ENCODE measurements at regions of chr13 and their contacts with region 1.

Region 1: DNA sequence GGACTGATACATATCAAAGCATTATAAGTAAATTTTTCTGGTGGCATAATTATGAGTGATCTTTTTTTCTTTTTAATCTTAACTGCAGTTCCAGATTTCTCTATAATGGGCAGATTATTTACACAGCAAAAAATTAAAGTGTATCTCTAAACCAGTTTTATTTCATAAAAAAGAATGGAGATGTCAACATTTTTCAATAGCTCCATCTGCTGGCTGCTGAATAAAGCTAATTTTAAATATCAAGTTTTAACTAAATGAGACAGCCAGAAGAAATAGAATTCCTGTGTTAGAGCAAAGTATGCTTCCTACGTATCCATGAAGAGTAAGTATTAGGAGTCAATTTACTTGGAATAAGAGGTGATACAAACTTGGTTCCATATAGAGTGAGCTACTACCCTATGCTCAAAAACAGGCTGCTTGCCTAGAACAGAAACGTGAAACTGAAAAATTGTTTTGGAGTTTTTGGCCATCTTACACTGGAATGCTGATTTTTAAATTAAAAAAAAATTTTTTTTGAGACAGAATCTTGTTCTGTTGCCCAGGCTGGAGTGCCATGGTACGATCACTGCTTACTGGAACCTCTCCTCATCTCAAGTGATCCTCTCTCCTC is 5.0 kb upstream of the PDS5B start:
- DNase-seq: no peak

Region 2: GRCh38 chr13:31909864-31910551 is 671.3 kb before region 1 on chr13:
- CTCF ChIA-PET with region 1: interaction called, 11 read pairs
- POLR2A ChIA-PET with region 1: no interaction called
- DNase-seq: peak; percentile 33

Measured in HEK293T (cell line).